PC-9 (cell line): ENCODE measurements at regions of chrX and their contacts with region 1.

Region 1: DNA sequence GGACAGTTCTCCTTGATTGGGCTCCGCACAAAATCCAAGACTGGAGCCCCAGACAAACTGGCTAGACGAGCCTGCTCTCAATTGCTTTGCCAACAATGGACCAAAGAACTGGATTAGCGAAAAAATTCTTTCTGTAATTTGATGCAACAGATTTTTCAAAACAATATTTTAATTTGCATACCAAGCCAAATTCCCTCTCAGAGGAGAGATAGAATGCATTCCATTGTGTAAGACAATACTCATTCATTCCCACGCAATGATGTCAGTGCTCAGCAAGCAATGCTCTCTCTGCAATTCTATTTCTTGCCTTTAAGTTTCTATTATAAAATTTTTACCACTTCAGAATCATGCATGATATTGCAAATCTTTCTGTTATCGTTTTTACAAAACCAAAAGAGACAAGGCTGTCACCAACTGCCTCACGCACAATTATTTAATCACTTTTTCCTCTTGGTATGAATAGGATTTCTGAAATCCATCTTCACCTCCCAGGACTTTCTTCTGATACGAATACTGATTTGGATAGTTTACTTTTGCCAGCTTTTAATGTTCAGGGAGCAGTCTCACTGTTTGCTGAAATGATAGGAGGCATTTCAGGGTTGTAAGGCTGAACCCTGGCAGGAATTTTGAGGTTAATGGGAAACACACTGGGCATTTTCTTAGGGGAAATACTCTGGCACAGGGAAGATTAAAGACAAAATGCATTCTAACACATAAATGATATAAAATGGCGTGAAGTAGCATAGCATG is 46.1 kb upstream of the HCCS start:
- DNase-seq: peak; percentile 39 to 79
- H3K4me3 ChIP-seq: no peak overlapping the region; the same call in 1 of the 2 replicates
- H3K27ac ChIP-seq: peak overlapping the region; percentile 53
- H3K4me1 ChIP-seq: 0 out of 2 replicates have a peak, but pooled peaks cover 5% of the 10 kb centered on the region
- H3K27me3 ChIP-seq: no peaks in the 10 kb centered on the region
- CTCF ChIP-seq: no peak

Region 2: DNA sequence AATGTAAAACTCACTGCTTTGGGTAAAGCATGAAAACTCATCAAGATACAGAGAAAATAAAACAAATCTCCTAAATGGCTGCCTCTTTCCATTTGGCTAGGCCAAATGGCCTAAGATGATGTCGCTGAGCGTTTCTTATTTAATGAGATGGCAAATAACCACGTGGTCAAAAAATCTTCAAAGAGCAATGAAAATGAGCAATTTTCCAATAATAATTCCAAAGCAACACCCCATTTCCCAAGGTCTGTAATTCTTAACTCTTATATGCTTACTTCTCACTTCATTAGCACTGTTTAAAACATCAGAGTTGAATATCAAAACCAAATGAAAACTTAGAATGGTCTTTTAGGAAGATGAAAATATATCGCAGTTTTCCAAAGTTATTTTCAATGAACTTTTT is 222.4 kb before region 1 on chrX:
- CTCF ChIA-PET with region 1: interaction called, 11 read pairs
- POLR2A ChIA-PET with region 1: no interaction called
- intact Hi-C with region 1: no loop called
- DNase-seq: no peak
- H3K4me3 ChIP-seq: no peak overlapping the region
- H3K27ac ChIP-seq: no peak overlapping the region
- H3K4me1 ChIP-seq: no peaks in the 10 kb centered on the region
- H3K27me3 ChIP-seq: no peaks in the 10 kb centered on the region
- CTCF ChIP-seq: no peak

Region 3: DNA sequence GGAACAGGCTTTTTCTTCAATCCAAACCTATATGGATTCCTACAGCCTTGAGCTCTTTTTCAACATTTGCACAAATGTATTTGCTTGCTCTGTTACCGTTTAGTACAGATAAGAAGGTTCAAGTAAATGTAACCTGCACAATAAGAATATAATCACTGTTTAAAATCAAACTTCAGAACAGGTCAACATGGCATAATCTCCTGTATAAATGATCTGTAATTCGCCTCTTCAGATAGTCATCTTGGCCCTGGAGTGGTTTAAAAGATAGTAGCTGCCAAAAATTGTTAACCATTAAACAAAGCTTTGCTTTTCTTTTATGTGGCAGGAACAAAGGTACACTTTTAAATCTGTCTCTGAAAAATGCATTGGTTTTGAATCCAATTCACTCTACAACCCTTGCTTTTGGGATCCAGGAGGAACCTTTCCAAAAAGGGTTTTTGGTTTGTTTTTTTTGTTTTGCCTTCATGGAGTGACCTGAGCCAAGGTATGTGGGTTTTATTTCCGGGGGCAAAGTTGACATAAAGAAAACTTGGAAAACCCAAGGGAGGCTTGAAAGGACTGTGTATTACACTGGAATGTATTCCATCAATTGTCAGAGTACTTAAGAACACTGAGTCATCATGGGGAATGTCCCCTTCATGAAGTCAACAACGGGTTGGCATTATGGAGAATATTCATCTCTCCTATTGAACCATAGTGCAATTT is 164.3 kb before region 1 on chrX:
- CTCF ChIA-PET with region 1: no interaction called
- POLR2A ChIA-PET with region 1: no interaction called
- intact Hi-C with region 1: loop called (anchors 5 kb)
- DNase-seq: no peak
- H3K4me3 ChIP-seq: no peak overlapping the region
- H3K27ac ChIP-seq: no peak overlapping the region
- H3K4me1 ChIP-seq: no peaks in the 10 kb centered on the region; the same call in 1 of the 2 replicates
- H3K27me3 ChIP-seq: no peaks in the 10 kb centered on the region
- CTCF ChIP-seq: no peak